Astrocyte of the cerebellum (primary cell): ENCODE measurements at regions of chr3 and their contacts with region 1.

Region 1: GRCh38 chr3:191631496-191631895 is 170.5 kb downstream of the PYDC2 start:
- DNase-seq: no peak
- H3K4me3 ChIP-seq: no peak overlapping the region
- CTCF ChIP-seq: no peak

Region 2: GRCh38 chr3:191470545-191470944 is 161.0 kb before region 1 on chr3:
- in situ Hi-C with region 1: no loop called
- DNase-seq: no peak
- H3K4me3 ChIP-seq: no peak overlapping the region
- CTCF ChIP-seq: no peak

Region 3: DNA sequence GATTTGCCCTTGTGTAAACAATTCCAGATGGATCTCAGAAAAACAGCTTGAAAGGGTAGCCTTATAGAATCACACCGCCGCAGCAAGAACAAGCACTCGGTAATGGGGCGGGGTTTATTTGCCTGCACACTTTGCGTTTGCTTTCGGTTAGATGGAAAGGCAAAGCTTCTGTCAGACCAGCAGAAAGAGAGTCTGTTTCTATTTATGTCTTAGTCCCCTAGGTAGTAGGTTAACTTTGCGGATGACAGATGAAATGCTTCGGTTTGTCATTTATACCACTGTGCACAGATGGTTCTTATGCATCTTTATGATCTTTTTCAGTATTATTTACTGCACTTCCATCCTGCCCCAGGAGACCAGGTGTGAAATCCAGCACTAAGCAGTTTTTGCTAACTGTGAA is 108.3 kb before region 1 on chr3:
- in situ Hi-C with region 1: no loop called
- DNase-seq: no peak
- H3K4me3 ChIP-seq: no peak overlapping the region
- CTCF ChIP-seq: no peak

Region 4: GRCh38 chr3:191557322-191557721 is 74.2 kb before region 1 on chr3:
- in situ Hi-C with region 1: no loop called
- DNase-seq: no peak
- H3K4me3 ChIP-seq: no peak overlapping the region
- CTCF ChIP-seq: no peak

Region 5: GRCh38 chr3:191592105-191592504 is 39.4 kb before region 1 on chr3:
- in situ Hi-C with region 1: loop called (anchors 5 kb)
- DNase-seq: no peak
- H3K4me3 ChIP-seq: no peak overlapping the region
- CTCF ChIP-seq: no peak